ENCODE measurements at regions of chr3 and their contacts with region 1.

Region 1: DNA sequence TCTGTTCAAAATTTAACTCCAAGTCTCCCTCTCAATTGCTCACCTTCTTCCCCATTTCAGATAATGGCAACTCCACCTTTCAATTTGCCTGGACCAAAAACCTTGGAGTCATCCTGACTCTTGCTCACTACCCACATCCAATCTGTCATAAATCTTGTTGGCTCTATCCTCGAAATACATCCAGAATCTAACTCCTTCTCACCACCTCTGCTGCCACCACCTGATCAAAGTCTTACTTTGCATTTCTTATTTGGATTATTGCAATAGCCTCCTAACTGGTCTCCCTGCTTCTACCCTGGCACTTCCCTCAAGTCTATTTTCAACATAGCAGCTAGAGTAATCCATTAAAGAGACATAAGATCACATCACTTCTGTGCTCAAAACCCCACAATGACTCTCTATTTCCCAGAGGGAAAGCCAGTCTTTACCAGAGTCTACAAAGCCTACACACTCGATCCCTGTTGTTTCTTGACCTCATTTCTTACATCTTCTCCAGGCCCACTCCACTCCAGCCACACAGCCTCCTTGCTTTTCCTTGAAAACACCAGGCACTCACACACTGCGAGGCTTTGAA is 86.6 kb downstream of the GPR156 start:
- DNase-seq: peak; percentile 8
- ATAC-seq: peak; percentile 43; the same call in 1 of the 3 replicates
- H3K4me3 ChIP-seq: no peak overlapping the region
- H3K27ac ChIP-seq: no peak overlapping the region
- H3K4me1 ChIP-seq: no peaks in the 10 kb centered on the region
- H3K27me3 ChIP-seq: no peaks in the 10 kb centered on the region
- CTCF ChIP-seq: peak; percentile 55
- EP300 ChIP-seq: no peak
- POLR2A ChIP-seq: no peak
- RAD21 ChIP-seq: no peak

Region 2: GRCh38 chr3:119891944-119892721 is 306.3 kb before region 1 on chr3:
- CTCF ChIA-PET with region 1: interaction called, 8 read pairs
- POLR2A ChIA-PET with region 1: no interaction called
- in situ Hi-C with region 1: no loop called
- intact Hi-C with region 1: loop called (anchors 1 kb)
- DNase-seq: peak; percentile 55
- ATAC-seq: peak; percentile 73
- H3K4me3 ChIP-seq: no peak overlapping the region
- H3K27ac ChIP-seq: no peak overlapping the region
- H3K4me1 ChIP-seq: no peaks in the 10 kb centered on the region
- H3K27me3 ChIP-seq: no peaks in the 10 kb centered on the region
- CTCF ChIP-seq: peak; percentile 67
- EP300 ChIP-seq: no peak
- POLR2A ChIP-seq: no peak
- RAD21 ChIP-seq: peak; percentile 55; the same call in 1 of the 2 replicates

Region 3: GRCh38 chr3:120129718-120130513 is 68.5 kb before region 1 on chr3:
- CTCF ChIA-PET with region 1: no interaction called
- POLR2A ChIA-PET with region 1: no interaction called
- in situ Hi-C with region 1: no loop called
- intact Hi-C with region 1: loop called (anchors 10 kb)
- DNase-seq: no peak
- ATAC-seq: no peak
- H3K4me3 ChIP-seq: no peak overlapping the region
- H3K27ac ChIP-seq: no peak overlapping the region
- H3K4me1 ChIP-seq: no peaks in the 10 kb centered on the region
- H3K27me3 ChIP-seq: no peaks in the 10 kb centered on the region
- CTCF ChIP-seq: no peak
- EP300 ChIP-seq: no peak
- POLR2A ChIP-seq: no peak
- RAD21 ChIP-seq: no peak

Region 4: DNA sequence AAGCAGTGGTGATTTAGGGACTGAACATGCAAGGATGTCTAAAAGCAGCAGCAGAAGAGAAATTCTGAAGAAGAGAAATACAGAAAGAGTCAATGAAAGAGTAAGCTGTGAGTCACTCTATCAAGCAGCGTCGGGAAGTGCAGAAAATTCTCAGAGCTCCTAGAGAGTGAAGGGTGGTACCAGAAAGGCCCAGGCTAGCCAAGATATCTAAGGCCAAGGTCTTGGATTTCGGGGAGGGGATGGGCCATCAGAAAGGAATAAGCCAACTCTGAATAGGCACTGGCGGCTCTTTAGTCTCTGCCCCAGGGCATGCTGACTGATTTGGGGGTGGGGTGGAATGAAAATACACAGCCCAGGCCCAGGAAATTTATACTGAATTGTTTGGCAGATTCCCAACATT is 15.8 kb after region 1 on chr3:
- CTCF ChIA-PET with region 1: no interaction called
- POLR2A ChIA-PET with region 1: no interaction called
- in situ Hi-C with region 1: no loop called
- intact Hi-C with region 1: no loop called
- DNase-seq: no peak
- ATAC-seq: no peak
- H3K4me3 ChIP-seq: no peak overlapping the region
- H3K27ac ChIP-seq: no peak overlapping the region
- H3K4me1 ChIP-seq: no peaks in the 10 kb centered on the region
- H3K27me3 ChIP-seq: peaks cover 0 to 3% of the 10 kb centered on the region in 2 experiments; a peak in 3 of 5 replicates
- CTCF ChIP-seq: no peak
- EP300 ChIP-seq: no peak
- POLR2A ChIP-seq: no peak
- RAD21 ChIP-seq: no peak